Activated CD4-positive, alpha-beta memory T cell treated with anti-CD3 and anti-CD28 coated beads, Interleukin-2, amount 10 ng/mL, durations not matched to agents 7 days and 5 days (primary cell): ENCODE measurements at regions of chr10 and their contacts with region 1.

Region 1: GRCh38 chr10:72048450-72049124 is 39.8 kb downstream of the SPOCK2 start:
- DNase-seq: peak; percentile 93
- H3K4me3 Mint-ChIP-seq: no peak overlapping the region
- H3K27ac Mint-ChIP-seq: peak overlapping the region; percentile 8
- H3K4me1 Mint-ChIP-seq: peaks cover 8% of the 10 kb centered on the region
- H3K27me3 Mint-ChIP-seq: no peaks in the 10 kb centered on the region

Region 2: GRCh38 chr10:71893920-71894319 is 154.7 kb before region 1 on chr10:
- CTCF ChIA-PET with region 1: interaction called, 30 read pairs
- POLR2A ChIA-PET with region 1: interaction called, 5 read pairs
- DNase-seq: no peak
- H3K4me3 Mint-ChIP-seq: no peak overlapping the region
- H3K27ac Mint-ChIP-seq: no peak overlapping the region
- H3K4me1 Mint-ChIP-seq: peaks cover 9% of the 10 kb centered on the region
- H3K27me3 Mint-ChIP-seq: peaks cover 9% of the 10 kb centered on the region

Region 3: DNA sequence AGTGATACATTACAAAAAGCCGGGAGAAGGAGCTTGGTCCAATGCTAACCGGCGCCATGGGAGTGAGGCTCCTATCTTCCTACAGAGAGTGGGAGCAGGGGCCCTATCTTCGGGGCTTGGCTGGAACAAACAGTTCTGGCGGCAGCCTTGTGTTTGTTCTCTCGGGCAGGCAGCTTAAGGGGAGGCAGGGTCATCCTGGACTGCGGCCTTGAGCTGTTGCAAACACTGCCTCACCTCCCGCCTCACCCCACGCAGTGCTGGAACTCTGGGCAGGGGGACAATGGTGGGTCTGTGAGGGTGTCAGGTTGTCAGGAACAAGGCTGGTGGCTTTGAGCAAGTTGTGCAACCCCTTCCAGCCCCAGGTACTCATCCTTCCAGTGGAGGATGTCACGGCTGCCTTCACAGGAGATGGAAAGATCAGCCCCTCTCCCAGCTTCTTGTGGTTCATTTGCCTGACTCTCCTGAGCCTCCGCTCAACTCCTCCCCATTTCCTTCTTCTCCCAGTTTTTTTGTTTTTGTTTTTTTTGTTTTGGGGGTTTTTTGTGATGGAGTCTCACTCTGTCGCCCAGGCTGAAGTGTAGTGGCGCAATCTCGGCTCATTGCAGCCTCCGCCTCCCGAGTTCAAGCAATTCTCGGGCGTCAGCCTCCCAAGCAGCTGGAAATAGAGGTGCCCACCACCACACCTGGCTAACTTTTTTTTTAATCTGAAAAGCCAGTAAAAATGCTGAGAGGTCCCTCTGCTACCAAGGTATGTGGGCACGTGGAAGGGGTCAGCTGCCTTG is 17.6 kb before region 1 on chr10:
- CTCF ChIA-PET with region 1: interaction called, 10 read pairs
- POLR2A ChIA-PET with region 1: no interaction called
- DNase-seq: no peak
- H3K4me3 Mint-ChIP-seq: no peak overlapping the region
- H3K27ac Mint-ChIP-seq: no peak overlapping the region
- H3K4me1 Mint-ChIP-seq: no peaks in the 10 kb centered on the region
- H3K27me3 Mint-ChIP-seq: peaks cover 27% of the 10 kb centered on the region

Region 4: GRCh38 chr10:72058989-72059842 is 10.6 kb after region 1 on chr10:
- CTCF ChIA-PET with region 1: interaction called, 20 read pairs
- POLR2A ChIA-PET with region 1: interaction called, 8 read pairs
- DNase-seq: no peak
- H3K4me3 Mint-ChIP-seq: no peak overlapping the region
- H3K27ac Mint-ChIP-seq: peak overlapping the region; percentile 29
- H3K4me1 Mint-ChIP-seq: peaks cover 2% of the 10 kb centered on the region
- H3K27me3 Mint-ChIP-seq: peaks cover 1% of the 10 kb centered on the region

Region 5: DNA sequence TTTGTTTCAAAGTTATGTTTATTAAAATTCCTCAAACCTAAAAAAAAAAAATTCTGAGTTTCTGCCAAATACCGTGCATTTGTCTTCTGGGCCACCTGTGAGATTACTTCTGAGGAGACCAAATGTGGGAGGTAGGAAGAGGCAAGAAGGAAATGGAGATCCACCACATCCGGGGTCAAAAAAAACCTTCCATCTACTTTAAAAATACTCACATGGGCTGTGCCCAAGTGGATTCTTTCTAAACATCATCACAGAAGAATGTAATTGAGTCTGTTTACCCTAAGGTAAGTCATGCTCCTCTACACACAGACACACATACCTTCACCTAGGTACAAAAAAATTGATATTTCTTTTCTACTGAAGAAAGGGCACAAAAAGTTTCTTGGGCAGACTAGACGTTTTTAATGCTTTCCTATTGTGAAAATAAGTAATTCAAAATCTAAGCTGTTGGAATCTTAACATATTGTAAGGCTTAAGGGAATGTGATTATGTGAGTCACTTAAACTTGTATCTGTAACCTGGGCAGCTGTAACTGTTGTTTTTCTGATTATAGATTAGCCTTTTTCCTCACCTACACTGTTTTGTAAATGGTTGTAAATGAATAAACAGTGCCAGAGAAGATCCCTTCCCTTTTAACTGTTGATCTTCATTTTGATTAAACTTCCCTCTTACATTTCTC is 58.9 kb after region 1 on chr10:
- CTCF ChIA-PET with region 1: interaction called, 19 read pairs
- POLR2A ChIA-PET with region 1: no interaction called
- DNase-seq: no peak
- H3K4me3 Mint-ChIP-seq: peak overlapping the region; percentile 79
- H3K27ac Mint-ChIP-seq: peak overlapping the region; percentile 95
- H3K4me1 Mint-ChIP-seq: peaks cover 61% of the 10 kb centered on the region
- H3K27me3 Mint-ChIP-seq: no peaks in the 10 kb centered on the region

Region 6: DNA sequence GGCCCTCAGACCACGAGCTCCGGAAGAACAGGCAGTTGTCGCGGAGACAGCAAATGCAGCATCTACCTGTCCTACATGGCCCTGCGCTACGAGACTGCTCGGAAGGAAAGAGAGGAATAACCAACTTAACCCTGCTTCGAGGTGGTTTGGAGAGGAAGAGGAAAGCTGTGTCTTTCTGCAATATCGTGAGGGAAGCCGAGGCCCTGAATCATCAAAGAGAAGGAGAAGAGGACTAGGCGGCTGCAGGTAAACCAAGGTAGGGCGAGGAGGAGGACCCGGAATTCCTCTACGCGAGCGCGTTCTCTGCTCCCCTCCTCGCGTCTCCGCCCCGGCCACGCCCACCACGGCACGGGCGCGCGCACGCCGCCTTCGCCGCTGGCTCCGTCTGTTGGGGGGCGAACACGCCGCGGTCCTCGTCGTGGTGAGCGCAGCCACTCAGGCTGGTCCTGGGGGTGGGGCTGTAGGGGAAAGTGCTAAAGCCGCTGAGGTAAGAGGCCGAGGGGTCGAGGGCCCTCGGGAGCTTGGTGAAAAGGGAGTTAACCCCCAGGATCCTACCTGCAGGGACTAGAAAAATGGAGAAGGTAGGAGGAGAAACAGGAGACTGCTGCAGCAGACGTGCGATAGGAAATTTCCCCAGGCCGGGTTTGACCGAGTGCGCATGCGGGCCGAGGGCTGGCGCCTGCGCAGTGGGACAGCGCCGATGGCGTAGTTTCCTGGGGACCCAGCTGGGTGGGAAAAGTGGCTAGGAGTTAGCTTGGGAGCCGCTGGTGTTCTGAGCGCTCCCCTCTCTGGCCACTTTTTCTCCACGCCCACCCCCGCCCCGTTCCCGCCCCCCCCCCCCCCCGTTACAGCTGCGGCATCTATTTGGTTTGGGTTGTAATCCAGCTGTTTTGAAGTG is 167.3 kb after region 1 on chr10 and contains the starts of genes ANAPC16 and ASCC1:
- CTCF ChIA-PET with region 1: interaction called, 29 read pairs
- POLR2A ChIA-PET with region 1: interaction called, 3 read pairs
- DNase-seq: peak; percentile 94
- H3K4me3 Mint-ChIP-seq: peak within 1 kb of the TSS; percentile 98
- H3K27ac Mint-ChIP-seq: peak within 1 kb of the TSS; percentile 99
- H3K4me1 Mint-ChIP-seq: peaks cover 61% of the 10 kb centered on the region
- H3K27me3 Mint-ChIP-seq: no peaks in the 10 kb centered on the region
- total RNA-seq, gene ANAPC16: 94.2 to 101 TPM
- total RNA-seq, gene ASCC1: 35.5 to 36.2 TPM